Activated CD4-positive, alpha-beta T cell treated with anti-CD3 and anti-CD28 coated beads for 36 hours (primary cell): ENCODE measurements at regions of chr2 and their contacts with region 1.

Region 1: GRCh38 chr2:74542978-74543377 is 10.8 kb downstream of the LOXL3 start:
- DNase-seq: no peak
- ATAC-seq: no peak
- H3K4me3 Mint-ChIP-seq: no peak overlapping the region
- H3K27ac Mint-ChIP-seq: no peak overlapping the region
- H3K4me1 Mint-ChIP-seq: no peaks in the 10 kb centered on the region
- H3K27me3 Mint-ChIP-seq: peaks cover 31% of the 10 kb centered on the region

Region 2: GRCh38 chr2:74566754-74567085 is 23.7 kb after region 1 on chr2:
- CTCF ChIA-PET with region 1: no interaction called
- POLR2A ChIA-PET with region 1: no interaction called
- intact Hi-C with region 1: loop called in 1 of 2 experiments (anchors 2 kb)
- DNase-seq: no peak
- ATAC-seq: peak; percentile 65
- H3K4me3 Mint-ChIP-seq: no peak overlapping the region
- H3K27ac Mint-ChIP-seq: peak overlapping the region; percentile 78
- H3K4me1 Mint-ChIP-seq: peaks cover 32% of the 10 kb centered on the region
- H3K27me3 Mint-ChIP-seq: peaks cover 25% of the 10 kb centered on the region

Region 3: GRCh38 chr2:75503048-75503607 is 960.1 kb after region 1 on chr2:
- CTCF ChIA-PET with region 1: no interaction called
- POLR2A ChIA-PET with region 1: no interaction called
- intact Hi-C with region 1: no loop called
- DNase-seq: no peak
- ATAC-seq: no peak
- H3K4me3 Mint-ChIP-seq: no peak overlapping the region
- H3K27ac Mint-ChIP-seq: no peak overlapping the region
- H3K4me1 Mint-ChIP-seq: no peaks in the 10 kb centered on the region
- H3K27me3 Mint-ChIP-seq: peaks cover 2% of the 10 kb centered on the region